ENCODE measurements at regions of chr4 and their contacts with region 1.

Region 1: GRCh38 chr4:123661080-123661737 is 264.6 kb downstream of the SPRY1 start:
- DNase-seq: no peak
- ATAC-seq: no peak
- H3K4me3 ChIP-seq: no peak overlapping the region
- H3K27ac ChIP-seq: no peak overlapping the region
- H3K4me1 ChIP-seq: no peaks in the 10 kb centered on the region
- H3K27me3 ChIP-seq: peaks cover 0 to 2% of the 10 kb centered on the region in 2 experiments; a peak in 1 of 4 replicates
- CTCF ChIP-seq: peak in 2 of 3 experiments; percentile 21 to 38; a peak in 3 of 6 replicates
- EP300 ChIP-seq: no peak
- POLR2A ChIP-seq: no peak
- RAD21 ChIP-seq: peak; percentile 51

Region 2: GRCh38 chr4:123102897-123103471 is 558.2 kb before region 1 on chr4:
- CTCF ChIA-PET with region 1: interaction called, 29 read pairs
- POLR2A ChIA-PET with region 1: no interaction called
- RAD21 ChIA-PET with region 1: interaction called, 5 read pairs
- SMC1A ChIA-PET with region 1: interaction called, 13 read pairs
- in situ Hi-C with region 1: loop called (anchors 10 kb)
- intact Hi-C with region 1: loop called (anchors 1 kb)
- DNase-seq: no peak
- ATAC-seq: peak; percentile 82
- H3K4me3 ChIP-seq: no peak overlapping the region
- H3K27ac ChIP-seq: no peak overlapping the region
- H3K4me1 ChIP-seq: no peaks in the 10 kb centered on the region
- H3K27me3 ChIP-seq: no peaks in the 10 kb centered on the region
- CTCF ChIP-seq: peak; percentile 58 to 71 (median 68); a peak in 5 of 6 replicates
- EP300 ChIP-seq: no peak
- POLR2A ChIP-seq: no peak
- RAD21 ChIP-seq: peak; percentile 82

Region 3: DNA sequence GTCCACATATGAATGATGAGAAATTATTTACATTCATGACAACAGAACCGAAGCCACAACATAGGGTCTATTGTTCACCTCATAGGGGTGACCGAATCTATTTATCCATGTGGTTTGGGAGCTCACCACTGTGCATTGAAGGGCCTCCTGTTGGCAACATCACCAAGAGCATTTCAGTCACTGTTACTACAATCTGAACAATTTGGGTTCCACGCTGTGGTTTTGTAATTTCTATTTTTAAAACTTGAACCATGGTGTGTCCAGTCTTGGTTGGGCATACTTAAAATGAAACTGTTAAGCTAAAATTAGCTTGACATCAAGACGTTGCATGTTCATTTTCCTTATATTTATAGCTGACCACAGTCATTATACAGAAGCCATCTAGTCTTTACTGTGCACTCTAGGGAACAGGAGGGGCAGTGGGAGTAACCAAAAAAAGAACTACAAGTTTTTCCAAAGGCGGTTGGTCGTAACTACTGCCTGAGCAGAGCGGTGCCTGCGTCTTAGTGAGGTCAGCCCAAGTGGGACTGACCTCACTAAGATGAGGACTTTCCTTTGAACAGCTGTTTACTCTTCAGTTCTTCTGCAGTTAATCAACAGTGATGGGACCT is 72.5 kb before region 1 on chr4:
- CTCF ChIA-PET with region 1: interaction called, 5 read pairs
- POLR2A ChIA-PET with region 1: no interaction called
- RAD21 ChIA-PET with region 1: no interaction called
- SMC1A ChIA-PET with region 1: interaction called, 5 read pairs
- in situ Hi-C with region 1: no loop called
- intact Hi-C with region 1: loop called (anchors 2 kb)
- DNase-seq: peak; percentile 84
- ATAC-seq: peak; percentile 95
- H3K4me3 ChIP-seq: peak overlapping the region; percentile 4; the same call in 1 of the 2 replicates
- H3K27ac ChIP-seq: no peak overlapping the region
- H3K4me1 ChIP-seq: peaks cover 9% of the 10 kb centered on the region
- H3K27me3 ChIP-seq: no peaks in the 10 kb centered on the region
- CTCF ChIP-seq: no peak
- EP300 ChIP-seq: peak; percentile 85 to 86
- POLR2A ChIP-seq: no peak
- RAD21 ChIP-seq: 0 out of 2 replicates have a peak, but pooled peaks have one; percentile 0

Region 4: GRCh38 chr4:123671633-123672404 is 10.6 kb after region 1 on chr4:
- CTCF ChIA-PET with region 1: interaction called, 29 read pairs
- POLR2A ChIA-PET with region 1: no interaction called
- RAD21 ChIA-PET with region 1: interaction called, 19 read pairs
- SMC1A ChIA-PET with region 1: interaction called, 13 read pairs
- in situ Hi-C with region 1: no loop called
- intact Hi-C with region 1: no loop called
- DNase-seq: peak; percentile 46
- ATAC-seq: peak; percentile 94
- H3K4me3 ChIP-seq: no peak overlapping the region
- H3K27ac ChIP-seq: no peak overlapping the region
- H3K4me1 ChIP-seq: no peaks in the 10 kb centered on the region
- H3K27me3 ChIP-seq: 0 out of 4 replicates have a peak, but pooled peaks cover 0 to 3% of the 10 kb centered on the region in 2 experiments
- CTCF ChIP-seq: no peak
- EP300 ChIP-seq: no peak; a peak in 1 of 4 replicates
- POLR2A ChIP-seq: no peak
- RAD21 ChIP-seq: no peak

Region 5: GRCh38 chr4:123816462-123816861 is 155.3 kb after region 1 on chr4:
- CTCF ChIA-PET with region 1: no interaction called
- POLR2A ChIA-PET with region 1: no interaction called
- RAD21 ChIA-PET with region 1: no interaction called
- SMC1A ChIA-PET with region 1: no interaction called
- in situ Hi-C with region 1: no loop called
- intact Hi-C with region 1: no loop called
- DNase-seq: no peak
- ATAC-seq: no peak
- H3K4me3 ChIP-seq: no peak overlapping the region
- H3K27ac ChIP-seq: no peak overlapping the region
- H3K4me1 ChIP-seq: no peaks in the 10 kb centered on the region
- H3K27me3 ChIP-seq: no peaks in the 10 kb centered on the region; a peak in 1 of 4 replicates
- CTCF ChIP-seq: no peak
- EP300 ChIP-seq: no peak
- POLR2A ChIP-seq: no peak
- RAD21 ChIP-seq: no peak

Measured in GM12878 (cell line).